ENCODE measurements at regions of chr1 and their contacts with region 1.

Region 1: DNA sequence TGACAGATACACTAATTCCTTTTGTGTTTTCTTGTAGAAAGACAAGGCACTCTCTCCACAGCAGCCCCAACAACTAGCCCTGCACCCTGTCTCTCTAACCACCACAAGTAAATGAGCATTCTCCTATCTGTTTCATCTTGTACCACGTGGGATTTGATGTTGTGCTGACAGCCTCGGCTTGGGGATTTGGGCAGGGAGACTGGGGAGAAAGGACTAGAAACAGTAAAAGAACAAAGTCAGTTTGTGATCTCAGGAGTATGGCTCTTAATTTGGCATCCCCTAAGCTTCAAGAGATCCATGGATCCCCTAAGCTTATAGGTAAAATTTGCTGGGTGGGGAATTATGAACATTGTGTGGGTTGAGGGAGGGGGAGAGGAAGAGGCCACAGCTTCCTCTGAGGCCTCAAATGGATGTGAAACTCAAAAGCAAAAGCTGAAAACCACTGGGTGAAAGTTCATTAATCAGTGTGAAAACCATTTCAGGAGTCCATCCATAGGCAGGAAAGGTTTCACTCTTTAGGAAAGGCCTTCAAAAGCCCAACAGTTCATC is 3.1 kb downstream of the C1orf162 start:
- DNase-seq: peak in 1 of 2 donors; percentile 74
- ATAC-seq: peak; percentile 14 to 60 (median 52)
- H3K4me3 ChIP-seq: peak overlapping the region; percentile 60
- H3K4me3 Mint-ChIP-seq: peak overlapping the region; percentile 97
- H3K27ac ChIP-seq: peak overlapping the region; percentile 69
- H3K27ac Mint-ChIP-seq: no peak overlapping the region
- H3K4me1 ChIP-seq: peaks cover 45% of the 10 kb centered on the region
- H3K4me1 Mint-ChIP-seq: peaks cover 36 to 48% of the 10 kb centered on the region in 2 donors
- H3K27me3 ChIP-seq: no peaks in the 10 kb centered on the region
- H3K27me3 Mint-ChIP-seq: no peaks in the 10 kb centered on the region
- CTCF ChIP-seq: no peak

Region 2: GRCh38 chr1:111214884-111215283 is 262.0 kb before region 1 on chr1:
- intact Hi-C with region 1: loop called (anchors 2 kb)
- DNase-seq: peak in 1 of 2 donors; percentile 67
- ATAC-seq: no peak
- H3K4me3 ChIP-seq: no peak overlapping the region
- H3K4me3 Mint-ChIP-seq: peak overlapping the region; percentile 86
- H3K27ac ChIP-seq: peak overlapping the region; percentile 80
- H3K27ac Mint-ChIP-seq: peak overlapping the region; percentile 94 to 95
- H3K4me1 ChIP-seq: peaks cover 73% of the 10 kb centered on the region
- H3K4me1 Mint-ChIP-seq: peaks cover 71 to 72% of the 10 kb centered on the region in 2 donors
- H3K27me3 ChIP-seq: no peaks in the 10 kb centered on the region
- H3K27me3 Mint-ChIP-seq: peaks cover 0 to 5% of the 10 kb centered on the region in 2 donors
- CTCF ChIP-seq: no peak

Region 3: DNA sequence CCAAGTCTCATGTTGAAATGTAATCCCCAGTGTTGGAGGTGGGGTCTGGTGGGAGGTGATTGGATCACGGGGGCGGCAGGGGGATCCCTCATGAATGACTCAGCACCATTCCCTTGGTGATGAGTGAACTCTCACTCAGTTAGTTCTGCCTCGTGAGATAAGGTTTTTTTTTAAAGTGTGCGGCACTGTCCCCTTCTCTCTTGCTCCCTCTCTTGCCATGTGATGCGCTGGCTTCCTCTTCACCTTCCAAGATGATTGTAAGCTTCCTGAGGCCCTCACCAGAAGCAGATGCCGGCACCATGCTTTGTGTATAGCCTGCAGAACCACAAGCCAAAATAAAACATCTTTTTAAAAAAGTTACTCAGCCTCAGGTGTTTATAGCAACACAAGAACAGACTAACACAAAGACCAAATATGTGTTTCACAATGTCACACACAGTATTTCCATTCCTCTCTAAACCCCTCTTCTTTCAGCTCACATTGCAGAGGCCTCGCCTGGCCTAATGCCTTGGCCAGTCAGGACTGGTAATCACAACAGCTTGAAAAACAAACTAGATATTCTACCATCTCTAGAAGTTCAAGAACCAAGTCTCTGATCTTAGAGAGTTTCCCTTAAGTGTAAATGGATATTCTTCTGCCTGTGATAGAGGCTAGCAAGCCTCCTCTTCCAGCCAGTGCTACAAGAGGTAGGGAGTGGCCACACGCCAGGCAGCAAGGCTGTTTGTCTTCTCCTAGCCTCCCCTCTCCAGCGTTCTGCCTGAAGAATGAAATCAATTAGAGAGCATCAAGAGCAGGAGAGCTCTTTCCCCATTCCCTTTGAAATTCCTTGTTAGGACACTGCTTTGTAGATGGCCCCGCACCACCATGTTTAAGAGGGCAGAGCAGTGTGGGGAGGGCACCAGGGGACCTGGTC is 123.2 kb after region 1 on chr1:
- intact Hi-C with region 1: loop called (anchors 1 kb)
- DNase-seq: no peak
- ATAC-seq: no peak
- H3K4me3 ChIP-seq: no peak overlapping the region
- H3K4me3 Mint-ChIP-seq: no peak overlapping the region
- H3K27ac ChIP-seq: no peak overlapping the region
- H3K27ac Mint-ChIP-seq: peak overlapping the region; percentile 45 to 78
- H3K4me1 ChIP-seq: peaks cover 69% of the 10 kb centered on the region
- H3K4me1 Mint-ChIP-seq: peaks cover 78 to 85% of the 10 kb centered on the region in 2 donors
- H3K27me3 ChIP-seq: no peaks in the 10 kb centered on the region
- H3K27me3 Mint-ChIP-seq: no peaks in the 10 kb centered on the region
- CTCF ChIP-seq: no peak

Region 4: DNA sequence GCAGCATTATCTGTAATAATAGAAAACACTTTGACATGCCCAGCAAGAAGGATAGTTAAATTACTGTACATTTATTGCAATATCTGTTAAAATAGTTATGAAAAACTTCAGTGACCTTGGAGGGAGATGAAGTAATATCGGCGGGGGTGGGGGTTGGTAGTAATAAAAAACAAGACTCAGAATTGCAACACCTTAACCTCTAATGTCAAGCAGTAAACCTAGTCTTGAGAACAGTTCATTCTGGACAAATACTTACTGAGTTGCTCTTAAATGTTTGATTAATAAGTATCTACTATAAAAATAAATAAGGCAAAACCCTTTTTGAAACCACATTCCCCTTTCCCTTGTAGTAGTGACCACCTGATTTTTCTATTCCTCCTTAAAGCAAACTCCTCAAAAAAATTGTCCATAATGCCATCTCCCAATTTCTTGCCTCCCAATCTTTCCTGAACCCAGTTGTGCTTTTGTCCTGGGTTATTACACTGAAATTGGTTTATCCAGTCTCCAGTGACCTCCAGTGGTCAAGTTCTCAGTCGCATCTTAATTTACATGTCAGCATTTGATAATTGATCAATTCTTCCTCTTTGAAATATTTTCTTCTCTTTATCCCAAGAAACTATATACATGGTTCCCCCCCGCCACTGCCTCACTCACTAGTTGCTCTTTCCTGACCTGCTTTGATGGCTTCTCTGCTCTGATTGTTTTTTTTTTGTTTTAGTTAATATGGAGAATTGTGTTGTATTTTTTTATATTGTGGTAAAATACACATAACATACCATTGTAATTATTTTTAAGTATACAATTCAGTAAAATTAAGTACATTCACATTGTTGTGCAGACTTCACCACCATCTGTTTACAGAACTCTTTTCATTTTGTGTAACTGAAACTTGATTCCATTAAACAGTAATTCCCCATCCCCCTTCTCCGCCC is 179.5 kb after region 1 on chr1:
- intact Hi-C with region 1: loop called (anchors 5 kb)
- DNase-seq: peak in 1 of 2 donors; percentile 72
- ATAC-seq: peak in 2 of 3 donors; percentile 36 to 50
- H3K4me3 ChIP-seq: no peak overlapping the region
- H3K4me3 Mint-ChIP-seq: no peak overlapping the region
- H3K27ac ChIP-seq: no peak overlapping the region
- H3K27ac Mint-ChIP-seq: peak overlapping the region; percentile 24 to 65
- H3K4me1 ChIP-seq: peaks cover 9% of the 10 kb centered on the region
- H3K4me1 Mint-ChIP-seq: peaks cover 31 to 44% of the 10 kb centered on the region in 2 donors
- H3K27me3 ChIP-seq: no peaks in the 10 kb centered on the region
- H3K27me3 Mint-ChIP-seq: no peaks in the 10 kb centered on the region
- CTCF ChIP-seq: peak; percentile 60

Measured in natural killer cell (primary cell).